ENCODE measurements at regions of chr11 and their contacts with region 1.

Region 1: DNA sequence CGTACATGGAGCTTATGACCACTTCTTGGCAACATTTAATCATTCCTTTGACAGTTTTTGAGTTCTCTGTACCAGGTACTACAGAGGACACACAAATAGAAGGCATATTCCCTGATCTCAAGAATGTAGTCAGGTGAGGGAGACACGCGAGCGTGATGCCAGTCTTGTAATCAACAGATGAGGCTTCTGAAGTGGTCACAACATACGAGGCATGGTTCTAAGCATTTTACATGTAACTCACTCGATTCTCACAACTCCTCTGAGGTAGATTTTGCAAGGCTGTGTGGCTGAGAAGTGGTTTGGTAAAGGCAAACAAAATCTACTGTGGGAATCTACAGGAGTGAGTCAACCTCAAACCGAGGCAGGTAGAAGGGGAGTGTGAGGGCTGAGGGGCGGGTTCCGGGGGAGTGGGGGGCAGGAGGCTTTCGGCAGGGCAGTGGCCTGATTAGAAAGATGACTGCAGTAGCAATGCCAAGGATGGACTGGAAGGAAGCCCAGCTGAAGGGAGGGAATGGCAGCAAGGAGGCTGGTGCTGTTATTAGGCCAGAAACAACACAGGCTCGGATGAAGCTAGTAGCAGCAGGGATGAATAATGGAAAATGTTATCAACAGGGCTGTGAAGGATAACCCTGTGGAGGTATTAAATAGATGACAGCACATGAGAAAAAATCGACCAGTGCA is 63.8 kb downstream of the ST14 start:
- DNase-seq: no peak
- H3K4me3 ChIP-seq: no peak overlapping the region
- H3K27ac ChIP-seq: no peak overlapping the region
- H3K4me1 ChIP-seq: no peaks in the 10 kb centered on the region
- H3K27me3 ChIP-seq: no peaks in the 10 kb centered on the region

Region 2: DNA sequence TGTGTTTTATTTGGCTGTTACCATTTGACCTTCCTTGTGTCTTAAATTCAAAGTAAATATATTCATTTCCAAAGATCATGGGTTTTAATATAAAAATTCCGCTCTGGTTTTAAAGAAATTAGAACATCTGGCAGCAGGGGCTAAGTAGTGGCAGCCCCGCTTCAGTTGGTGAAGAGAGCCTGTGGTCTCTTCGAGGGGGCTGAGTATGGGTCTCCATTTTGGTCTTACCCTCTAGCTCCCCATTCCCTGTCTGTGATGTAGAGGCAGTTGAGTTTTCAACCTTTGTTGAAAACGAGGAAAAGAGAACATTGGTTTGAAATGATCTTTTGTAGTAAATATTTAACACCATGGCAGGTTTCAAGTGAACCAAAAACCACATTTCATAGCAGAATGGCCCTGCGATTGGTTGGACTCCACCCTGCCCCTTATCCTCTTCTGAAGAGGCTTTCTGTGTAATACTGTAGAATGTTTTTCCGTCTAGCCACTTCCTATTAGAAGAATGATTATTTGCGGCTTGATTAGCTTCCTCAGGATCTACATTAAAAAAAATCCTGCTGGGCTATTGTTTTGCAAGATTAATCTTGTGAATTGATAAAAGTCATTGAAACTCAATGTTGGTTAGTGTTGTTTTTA is 136.0 kb before region 1 on chr11:
- CTCF ChIA-PET with region 1: no interaction called
- POLR2A ChIA-PET with region 1: no interaction called
- DNase-seq: peak in 1 of 3 donors; percentile 60
- H3K4me3 ChIP-seq: peak overlapping the region in 1 of 7 experiments; percentile 38
- H3K27ac ChIP-seq: no peak overlapping the region
- H3K4me1 ChIP-seq: peaks cover 2 to 19% (median 5%) of the 10 kb centered on the region in 4 experiments
- H3K27me3 ChIP-seq: no peaks in the 10 kb centered on the region

Region 3: GRCh38 chr11:130213143-130213978 is 10.1 kb before region 1 on chr11:
- CTCF ChIA-PET with region 1: interaction called, 10 read pairs
- POLR2A ChIA-PET with region 1: no interaction called
- DNase-seq: peak; percentile 34 to 61 (median 56)
- H3K4me3 ChIP-seq: no peak overlapping the region
- H3K27ac ChIP-seq: no peak overlapping the region
- H3K4me1 ChIP-seq: peaks cover 0 to 3% (median 1%) of the 10 kb centered on the region in 4 experiments
- H3K27me3 ChIP-seq: peaks cover 0 to 6% (median 0%) of the 10 kb centered on the region in 5 experiments